ENCODE measurements at regions of chr6 and their contacts with region 1.

Region 1: DNA sequence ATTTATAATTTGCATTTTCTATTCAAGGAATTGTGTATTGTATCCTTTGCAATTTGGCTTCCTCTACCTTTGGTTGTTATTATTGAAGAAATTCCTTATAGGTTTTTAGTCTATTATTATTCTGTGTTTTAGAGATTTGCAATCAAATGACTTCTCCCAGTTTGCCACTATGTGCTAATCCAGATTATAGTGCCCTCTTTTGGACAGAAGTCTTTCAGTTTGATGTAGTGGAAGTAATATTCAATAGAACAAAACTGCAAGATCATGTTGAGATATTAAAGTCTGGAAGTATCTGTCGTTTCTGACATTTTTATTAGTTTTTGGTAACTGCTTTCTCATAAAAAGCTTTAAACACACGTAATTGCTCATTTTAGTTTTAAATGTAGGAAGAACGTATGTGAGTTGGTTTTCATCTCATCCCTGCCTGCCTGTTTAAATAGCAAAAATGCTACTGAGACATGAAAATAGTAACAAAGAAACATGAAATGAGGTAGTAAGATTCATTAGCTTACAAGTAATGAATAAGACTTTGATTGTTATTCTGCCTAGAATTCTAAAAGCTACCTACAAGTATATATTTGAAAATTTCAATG is 72.8 kb downstream of the RTN4IP1 start:
- DNase-seq: no peak
- ATAC-seq: no peak
- H3K4me3 Mint-ChIP-seq: no peak overlapping the region
- H3K27ac Mint-ChIP-seq: peak overlapping the region; percentile 13
- H3K4me1 Mint-ChIP-seq: peaks cover 31% of the 10 kb centered on the region
- H3K27me3 Mint-ChIP-seq: no peaks in the 10 kb centered on the region

Region 2: GRCh38 chr6:106360410-106360988 is 196.0 kb before region 1 on chr6 and contains the start of gene CRYBG1:
- CTCF ChIA-PET with region 1: no interaction called
- POLR2A ChIA-PET with region 1: no interaction called
- intact Hi-C with region 1: loop called in 1 of 2 experiments (anchors 10 kb)
- DNase-seq: peak; percentile 84
- ATAC-seq: peak; percentile 94
- H3K4me3 Mint-ChIP-seq: peak within 1 kb of the TSS; percentile 69
- H3K27ac Mint-ChIP-seq: peak within 1 kb of the TSS; percentile 19
- H3K4me1 Mint-ChIP-seq: peaks cover 11% of the 10 kb centered on the region
- H3K27me3 Mint-ChIP-seq: peaks cover 44% of the 10 kb centered on the region
- total RNA-seq, gene CRYBG1: 26.2 to 26.6 TPM

Region 3: GRCh38 chr6:106477790-106478189 is 78.7 kb before region 1 on chr6:
- CTCF ChIA-PET with region 1: no interaction called
- POLR2A ChIA-PET with region 1: interaction called, 4 read pairs
- intact Hi-C with region 1: loop called in 1 of 2 experiments (anchors 2 kb)
- DNase-seq: no peak
- ATAC-seq: no peak
- H3K4me3 Mint-ChIP-seq: no peak overlapping the region
- H3K27ac Mint-ChIP-seq: no peak overlapping the region
- H3K4me1 Mint-ChIP-seq: peaks cover 9% of the 10 kb centered on the region
- H3K27me3 Mint-ChIP-seq: no peaks in the 10 kb centered on the region

Region 4: GRCh38 chr6:106525111-106525881 is 31.2 kb before region 1 on chr6:
- CTCF ChIA-PET with region 1: interaction called, 12 read pairs
- POLR2A ChIA-PET with region 1: interaction called, 6 read pairs
- intact Hi-C with region 1: loop called (anchors 1 kb)
- DNase-seq: no peak
- ATAC-seq: peak; percentile 38
- H3K4me3 Mint-ChIP-seq: peak overlapping the region; percentile 88
- H3K27ac Mint-ChIP-seq: peak overlapping the region; percentile 93
- H3K4me1 Mint-ChIP-seq: peaks cover 77% of the 10 kb centered on the region
- H3K27me3 Mint-ChIP-seq: no peaks in the 10 kb centered on the region

Region 5: DNA sequence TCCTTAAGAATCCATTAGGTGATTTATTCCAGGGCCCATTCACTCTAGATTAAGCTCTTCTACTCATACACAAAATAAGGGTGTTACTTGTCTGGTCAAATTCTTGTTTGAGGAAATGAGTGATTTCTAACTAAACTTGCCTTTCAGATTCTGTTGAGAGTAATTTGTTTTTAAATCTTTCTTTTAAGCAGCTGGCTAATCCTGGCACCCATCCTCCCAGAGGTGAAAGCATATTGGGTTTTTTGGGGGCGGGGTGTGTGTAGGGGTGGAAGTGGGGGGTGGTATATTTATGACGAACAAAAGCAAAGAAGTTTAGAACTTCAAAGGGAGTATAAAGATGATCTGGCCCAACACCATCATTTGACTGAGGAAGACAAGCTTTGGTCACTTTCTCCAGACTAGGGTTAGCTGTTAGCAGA is 21.9 kb before region 1 on chr6:
- CTCF ChIA-PET with region 1: interaction called, 6 read pairs
- POLR2A ChIA-PET with region 1: interaction called, 4 read pairs
- intact Hi-C with region 1: loop called in 1 of 2 experiments (anchors 2 kb)
- DNase-seq: peak; percentile 72
- ATAC-seq: peak; percentile 79
- H3K4me3 Mint-ChIP-seq: no peak overlapping the region
- H3K27ac Mint-ChIP-seq: peak overlapping the region; percentile 78
- H3K4me1 Mint-ChIP-seq: peaks cover 80% of the 10 kb centered on the region
- H3K27me3 Mint-ChIP-seq: no peaks in the 10 kb centered on the region